ENCODE measurements at regions of chr2 and their contacts with region 1.

Region 1: GRCh38 chr2:85354286-85355072 is at the starts of genes ELMOD3 and RETSAT:
- DNase-seq: peak; percentile 79 to 99 (median 98)
- ATAC-seq: peak; percentile 99
- H3K4me3 ChIP-seq: peak within 1 kb of the TSS; percentile 86
- H3K4me3 Mint-ChIP-seq: peak within 1 kb of the TSS; percentile 91 to 100 (median 100)
- H3K27ac ChIP-seq: peak within 1 kb of the TSS; percentile 89
- H3K27ac Mint-ChIP-seq: peak within 1 kb of the TSS; percentile 93 to 100 (median 99)
- H3K4me1 ChIP-seq: peaks cover 19 to 28% of the 10 kb centered on the region in 2 donors
- H3K4me1 Mint-ChIP-seq: peaks cover 36 to 61% (median 53%) of the 10 kb centered on the region in 7 donors
- H3K27me3 ChIP-seq: no peaks in the 10 kb centered on the region
- H3K27me3 Mint-ChIP-seq: no peaks in the 10 kb centered on the region
- total RNA-seq, gene ELMOD3: 20.2 to 33.3 (median 21.7) TPM
- total RNA-seq, gene RETSAT: 18.5 to 30.5 (median 20.2) TPM

Region 2: DNA sequence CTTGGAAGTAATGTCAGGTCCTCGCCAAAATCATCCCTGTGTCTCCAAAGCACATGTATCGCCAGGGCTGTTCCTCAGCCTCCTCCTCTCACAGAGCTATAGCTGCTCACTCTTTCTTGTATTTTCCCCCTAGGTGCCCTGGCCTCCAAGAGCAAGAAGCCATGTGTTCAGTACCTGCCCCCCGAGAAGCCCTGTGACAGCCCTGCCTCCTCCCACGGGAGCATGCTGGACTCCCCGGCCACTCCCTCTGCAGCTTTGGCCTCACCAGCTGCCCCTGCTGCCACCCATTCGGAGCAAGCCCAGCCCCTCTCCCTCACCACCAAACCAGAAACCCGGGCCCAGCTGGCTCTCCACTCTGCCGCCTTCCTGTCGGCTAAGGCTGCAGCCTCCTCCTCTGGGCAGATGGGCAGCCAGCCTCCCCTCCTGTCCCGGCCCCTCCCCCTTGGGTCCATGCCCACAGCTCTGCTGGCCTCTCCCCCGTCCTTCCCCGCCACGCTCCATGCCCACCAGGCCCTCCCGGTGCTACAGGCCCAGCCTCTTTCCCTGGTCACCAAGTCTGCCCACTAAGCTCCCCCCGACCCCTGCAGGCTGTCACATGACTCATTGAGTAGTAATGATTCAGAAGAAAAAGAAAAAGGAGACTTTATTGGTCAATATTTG is 45.5 kb before region 1 on chr2:
- CTCF ChIA-PET with region 1: interaction called, 3 read pairs
- POLR2A ChIA-PET with region 1: interaction called, 7 read pairs
- intact Hi-C with region 1: loop called in 1 of 2 experiments (anchors 1 kb)
- DNase-seq: peak in 2 of 9 donors; percentile 16 to 18
- ATAC-seq: peak; percentile 8
- H3K4me3 ChIP-seq: peak overlapping the region; percentile 57
- H3K4me3 Mint-ChIP-seq: peak overlapping the region; percentile 23 to 93 (median 86)
- H3K27ac ChIP-seq: peak overlapping the region; percentile 67
- H3K27ac Mint-ChIP-seq: peak overlapping the region; percentile 43 to 98 (median 95)
- H3K4me1 ChIP-seq: peaks cover 11 to 31% of the 10 kb centered on the region in 2 donors
- H3K4me1 Mint-ChIP-seq: peaks cover 26 to 56% (median 48%) of the 10 kb centered on the region in 7 donors
- H3K27me3 ChIP-seq: no peaks in the 10 kb centered on the region
- H3K27me3 Mint-ChIP-seq: peaks cover 0 to 8% (median 0%) of the 10 kb centered on the region in 5 donors

Region 3: GRCh38 chr2:85390941-85391669 is 36.6 kb after region 1 on chr2:
- CTCF ChIA-PET with region 1: interaction called, 11 read pairs
- POLR2A ChIA-PET with region 1: interaction called, 5 read pairs
- intact Hi-C with region 1: loop called in 1 of 2 experiments (anchors 5 kb)
- DNase-seq: peak; percentile 52 to 79 (median 71)
- ATAC-seq: peak; percentile 76
- H3K4me3 ChIP-seq: no peak overlapping the region
- H3K4me3 Mint-ChIP-seq: no peak overlapping the region
- H3K27ac ChIP-seq: no peak overlapping the region
- H3K27ac Mint-ChIP-seq: peak overlapping the region in 5 of 9 donors; percentile 9 to 65 (median 38)
- H3K4me1 ChIP-seq: peaks cover 0 to 11% of the 10 kb centered on the region in 2 donors
- H3K4me1 Mint-ChIP-seq: peaks cover 5 to 27% (median 15%) of the 10 kb centered on the region in 7 donors
- H3K27me3 ChIP-seq: no peaks in the 10 kb centered on the region
- H3K27me3 Mint-ChIP-seq: no peaks in the 10 kb centered on the region

Region 4: DNA sequence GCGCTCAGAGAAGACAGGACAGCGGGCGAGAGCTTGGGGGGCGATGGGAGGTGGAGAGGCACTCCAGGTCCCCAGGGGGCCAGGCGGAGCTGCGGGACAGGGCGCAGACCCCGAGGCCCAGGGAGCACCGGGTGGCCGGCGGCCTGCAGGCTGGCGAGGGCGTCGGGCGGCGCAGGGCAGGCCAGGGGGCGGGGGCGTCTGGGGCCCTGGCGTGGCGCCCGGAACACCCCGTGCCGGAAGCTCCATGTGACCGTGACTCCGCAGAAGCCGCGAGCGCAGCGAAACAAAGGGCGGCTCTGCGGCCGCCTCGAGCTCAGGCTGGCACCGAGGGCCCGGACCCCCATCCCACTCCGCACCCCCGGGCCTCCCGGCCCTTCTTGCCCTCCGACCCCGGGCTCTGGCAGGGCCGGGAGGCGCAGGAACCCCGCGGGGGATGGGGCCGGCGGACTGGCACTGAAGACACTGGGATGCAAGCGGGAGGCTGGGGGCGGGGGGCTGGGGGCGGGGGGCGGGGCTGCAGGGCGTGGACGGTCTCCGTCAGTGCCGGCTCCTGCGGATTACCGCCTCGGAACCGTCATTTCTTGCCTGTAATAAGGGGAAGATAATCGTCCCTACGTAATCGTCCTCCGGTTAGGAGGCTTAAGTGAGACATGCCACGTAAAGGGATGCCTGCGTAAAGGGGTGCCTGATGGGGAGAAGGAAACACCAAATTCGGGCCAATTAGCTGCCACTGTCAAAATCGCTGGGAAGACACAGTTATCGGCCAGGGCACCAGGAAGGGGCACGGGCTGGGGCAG is 83.2 kb after region 1 on chr2:
- CTCF ChIA-PET with region 1: no interaction called
- POLR2A ChIA-PET with region 1: interaction called, 8 read pairs
- intact Hi-C with region 1: loop called (anchors 1 to 2 kb)
- DNase-seq: peak; percentile 65 to 78 (median 75)
- ATAC-seq: peak; percentile 87
- H3K4me3 ChIP-seq: peak overlapping the region; percentile 65
- H3K4me3 Mint-ChIP-seq: peak overlapping the region; percentile 86 to 95 (median 91)
- H3K27ac ChIP-seq: peak overlapping the region; percentile 82
- H3K27ac Mint-ChIP-seq: peak overlapping the region; percentile 90 to 96 (median 94)
- H3K4me1 ChIP-seq: peaks cover 12 to 25% of the 10 kb centered on the region in 2 donors
- H3K4me1 Mint-ChIP-seq: peaks cover 15 to 42% (median 34%) of the 10 kb centered on the region in 7 donors
- H3K27me3 ChIP-seq: no peaks in the 10 kb centered on the region
- H3K27me3 Mint-ChIP-seq: no peaks in the 10 kb centered on the region

Region 5: DNA sequence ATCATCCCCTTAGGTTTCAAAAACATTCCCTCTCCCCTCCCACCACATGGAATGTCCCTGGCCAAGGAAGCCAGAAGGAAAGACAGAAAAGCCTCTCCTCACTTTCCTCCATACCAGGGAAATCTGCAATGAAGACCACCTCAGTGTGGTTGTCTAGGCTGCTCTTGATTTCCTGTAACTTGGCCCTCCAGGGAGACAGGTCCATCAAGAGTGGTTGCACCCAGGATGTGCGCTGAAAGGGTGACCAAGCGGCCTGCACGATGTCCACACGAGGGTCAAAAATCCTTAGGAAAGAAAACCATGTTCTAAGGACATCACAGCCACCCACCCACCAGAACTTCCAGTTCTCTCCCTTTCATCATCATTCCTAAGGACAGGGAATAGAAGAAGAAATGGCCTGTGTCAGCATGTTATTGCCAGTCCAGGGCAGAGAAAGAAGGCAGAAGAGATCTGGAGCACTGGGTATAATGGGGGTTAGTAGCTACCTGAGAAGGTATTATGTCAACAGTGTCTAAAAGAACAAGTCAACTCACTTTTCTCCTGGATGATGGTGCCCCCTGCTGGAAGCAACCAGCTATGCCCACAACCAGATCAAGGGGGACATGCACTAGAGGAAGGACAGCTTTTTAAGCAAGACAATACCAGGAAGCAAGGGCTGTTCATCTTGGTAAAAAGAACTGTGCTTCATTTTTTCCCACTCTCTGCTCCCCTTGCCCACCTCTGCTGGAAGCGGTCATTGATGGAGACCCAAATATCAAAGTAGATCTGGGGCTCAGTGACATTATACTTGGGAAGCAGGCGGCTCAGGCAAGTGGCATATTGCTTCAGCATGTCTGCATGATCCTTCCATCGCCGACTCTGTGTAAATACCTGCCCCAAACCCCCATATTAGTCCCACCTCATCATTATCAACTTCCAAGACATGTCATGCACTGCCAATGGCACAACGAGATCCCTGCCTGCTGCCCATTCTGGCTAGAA is 197.5 kb after region 1 on chr2:
- CTCF ChIA-PET with region 1: interaction called, 3 read pairs
- POLR2A ChIA-PET with region 1: interaction called, 9 read pairs
- intact Hi-C with region 1: loop called in 1 of 2 experiments (anchors 1 kb)
- DNase-seq: peak; percentile 70 to 92 (median 88)
- ATAC-seq: peak; percentile 97
- H3K4me3 ChIP-seq: no peak overlapping the region
- H3K4me3 Mint-ChIP-seq: no peak overlapping the region
- H3K27ac ChIP-seq: no peak overlapping the region
- H3K27ac Mint-ChIP-seq: peak overlapping the region in 5 of 9 donors; percentile 12 to 62 (median 38)
- H3K4me1 ChIP-seq: no peaks in the 10 kb centered on the region
- H3K4me1 Mint-ChIP-seq: peaks cover 0 to 10% (median 6%) of the 10 kb centered on the region in 7 donors
- H3K27me3 ChIP-seq: no peaks in the 10 kb centered on the region
- H3K27me3 Mint-ChIP-seq: no peaks in the 10 kb centered on the region

Region 6: DNA sequence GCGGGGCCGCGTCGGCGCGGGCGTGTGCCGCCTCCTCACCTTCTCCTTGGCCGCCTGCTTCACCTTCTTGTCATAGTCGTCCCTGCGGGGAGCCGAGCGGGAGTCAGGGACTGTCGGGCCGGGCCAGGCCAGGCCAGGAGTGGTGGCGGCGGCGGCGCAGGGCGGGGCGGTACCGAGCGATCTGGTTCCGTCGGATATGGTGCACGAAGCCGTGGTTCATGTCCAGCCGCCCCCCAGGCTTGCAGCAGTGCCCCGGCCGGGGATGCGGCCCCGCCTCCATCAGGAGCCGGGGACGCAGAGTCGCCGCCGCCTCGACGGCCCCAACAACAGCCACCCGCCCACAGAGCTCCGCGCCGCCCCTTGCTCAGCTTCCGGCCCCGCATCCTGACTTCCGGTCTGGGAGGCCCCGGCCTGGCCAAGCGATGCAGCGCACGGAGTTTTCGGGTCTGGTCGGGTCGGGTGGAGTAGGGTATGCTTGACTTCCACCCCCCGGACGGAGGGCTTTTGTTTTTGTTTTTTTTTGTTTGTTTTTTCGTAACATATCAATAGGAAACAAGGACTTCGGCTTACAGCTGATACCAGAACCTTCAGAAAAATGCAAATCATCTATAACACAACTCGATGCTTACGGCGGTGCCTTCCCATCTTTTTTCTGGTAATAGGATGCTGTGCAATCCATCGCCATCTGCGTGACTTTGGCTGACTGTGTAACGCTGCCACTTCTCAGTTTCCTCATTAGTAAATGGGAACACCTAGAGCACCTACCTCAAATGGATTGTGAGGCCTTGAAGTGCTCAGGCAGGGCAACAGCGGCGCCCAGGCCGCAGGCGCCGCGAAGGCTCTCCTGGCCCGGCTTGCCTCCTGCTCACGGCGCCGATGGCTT is 257.5 kb after region 1 on chr2 and contains the start of gene C2orf68:
- CTCF ChIA-PET with region 1: no interaction called
- POLR2A ChIA-PET with region 1: interaction called, 3 read pairs
- intact Hi-C with region 1: loop called (anchors 1 to 2 kb)
- DNase-seq: peak; percentile 61 to 92 (median 75)
- ATAC-seq: peak; percentile 76
- H3K4me3 ChIP-seq: peak within 1 kb of the TSS; percentile 65
- H3K4me3 Mint-ChIP-seq: peak within 1 kb of the TSS; percentile 96 to 100 (median 98)
- H3K27ac ChIP-seq: peak within 1 kb of the TSS; percentile 81
- H3K27ac Mint-ChIP-seq: peak within 1 kb of the TSS; percentile 86 to 99 (median 96)
- H3K4me1 ChIP-seq: peaks cover 11 to 16% of the 10 kb centered on the region in 2 donors
- H3K4me1 Mint-ChIP-seq: peaks cover 14 to 52% (median 44%) of the 10 kb centered on the region in 7 donors
- H3K27me3 ChIP-seq: no peaks in the 10 kb centered on the region
- H3K27me3 Mint-ChIP-seq: no peaks in the 10 kb centered on the region
- total RNA-seq, gene C2orf68: 40.9 to 92.1 (median 51.6) TPM